ENCODE measurements at regions of chr3 and their contacts with region 1.

Region 1: DNA sequence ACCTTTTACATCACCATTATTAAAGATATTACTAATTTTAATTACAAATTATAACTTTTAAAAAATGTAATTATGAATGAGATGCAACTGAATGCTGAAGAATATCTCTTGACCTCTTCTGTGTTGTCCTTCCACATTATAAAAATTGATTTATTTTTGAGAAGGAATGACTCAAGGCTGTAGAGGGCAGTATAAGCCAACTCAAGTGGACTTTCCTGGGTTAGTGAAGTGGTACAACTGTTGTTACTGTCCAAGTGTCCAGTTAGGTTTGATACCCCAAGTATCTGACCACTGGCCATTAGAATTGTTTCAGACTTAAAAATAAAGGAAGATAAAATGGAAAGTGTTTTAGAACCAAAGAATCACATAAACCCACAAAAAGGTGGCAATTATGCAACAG is 51.9 kb downstream of the BBX start:
- DNase-seq: no peak
- H3K4me3 ChIP-seq: no peak overlapping the region
- H3K27ac ChIP-seq: no peak overlapping the region
- H3K27me3 ChIP-seq: no peaks in the 10 kb centered on the region
- CTCF ChIP-seq: peak; percentile 30 to 79 (median 62)

Region 2: DNA sequence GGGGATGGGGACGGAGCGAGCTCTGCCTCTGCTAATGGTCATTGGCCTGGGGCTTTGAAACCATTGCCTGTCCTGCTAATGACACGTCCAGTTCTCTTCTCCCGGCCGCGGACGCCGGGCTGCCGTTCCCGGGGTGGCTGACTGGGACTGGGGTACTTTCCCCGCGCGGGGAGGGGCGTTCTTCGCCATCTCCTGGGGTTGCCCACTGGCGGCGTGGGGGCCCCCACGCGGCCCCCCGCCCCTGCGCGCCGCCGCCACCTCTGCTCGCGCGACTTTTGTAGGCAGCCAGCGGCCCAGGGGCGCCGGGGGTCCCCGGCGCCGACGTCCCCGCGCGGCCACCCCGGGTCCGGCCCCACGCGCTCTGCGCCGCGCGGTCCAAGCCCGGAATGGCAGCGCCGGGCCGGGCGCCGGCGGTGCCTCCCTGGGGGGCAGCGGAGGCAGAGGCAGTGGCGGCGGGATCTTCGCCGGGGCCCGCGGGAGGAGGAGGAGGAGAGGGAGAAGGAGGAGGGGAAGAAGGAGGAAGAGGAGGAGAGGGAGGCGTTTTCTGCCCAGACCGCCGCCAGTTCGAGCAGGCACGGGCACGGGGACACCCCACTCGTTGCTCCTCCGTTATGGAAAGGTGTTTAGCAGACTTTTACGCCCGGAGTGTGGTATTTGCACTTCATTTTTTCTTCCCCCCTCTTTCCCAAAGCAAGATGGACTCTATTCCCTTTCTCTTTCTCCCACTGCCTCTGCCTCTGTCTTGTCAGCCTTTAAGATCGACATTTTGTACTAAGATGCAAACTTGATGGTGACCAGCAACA is 49.6 kb before region 1 on chr3:
- intact Hi-C with region 1: no loop called
- DNase-seq: peak in 8 of 10 donors; percentile 36 to 59 (median 49)
- H3K4me3 ChIP-seq: peak overlapping the region; percentile 65 to 94 (median 84)
- H3K27ac ChIP-seq: peak overlapping the region in 55 of 59 donors; percentile 67 to 99 (median 96)
- H3K27me3 ChIP-seq: no peaks in the 10 kb centered on the region
- CTCF ChIP-seq: no peak

Region 3: GRCh38 chr3:107660306-107660976 is 85.8 kb after region 1 on chr3:
- intact Hi-C with region 1: loop called (anchors 5 to 10 kb)
- DNase-seq: no peak
- H3K4me3 ChIP-seq: peak overlapping the region in 10 of 59 donors; percentile 1 to 24 (median 12)
- H3K27ac ChIP-seq: no peak overlapping the region
- H3K27me3 ChIP-seq: no peaks in the 10 kb centered on the region
- CTCF ChIP-seq: peak; percentile 49 to 84 (median 70)

Measured in dorsolateral prefrontal cortex (tissue), 120 donors.